H1 (cell line): ENCODE measurements at regions of chr16 and their contacts with region 1.

Region 1: GRCh38 chr16:28291873-28292660 is at the start of gene SBK1:
- DNase-seq: peak in 1 of 2 experiments; percentile 83
- H3K4me3 ChIP-seq: peak within 1 kb of the TSS; percentile 91 to 95 (median 94)
- H3K27ac ChIP-seq: peak within 1 kb of the TSS; percentile 77
- H3K4me1 ChIP-seq: peaks cover 3 to 16% (median 9%) of the 10 kb centered on the region in 4 experiments
- H3K27me3 ChIP-seq: no peaks in the 10 kb centered on the region
- CTCF ChIP-seq: no peak
- EP300 ChIP-seq: no peak
- POLR2A ChIP-seq: peak in 1 of 2 experiments; percentile 66; a peak in 2 of 3 replicates
- RAD21 ChIP-seq: no peak
- total RNA-seq, gene SBK1: 73.9 and 77.4 TPM in 2 replicates

Region 2: GRCh38 chr16:28304214-28304613 is 12.1 kb after region 1 on chr16:
- CTCF ChIA-PET with region 1: interaction called, 4 read pairs
- POLR2A ChIA-PET with region 1: interaction called, 26 read pairs
- DNase-seq: peak in 1 of 2 experiments; percentile 75
- H3K4me3 ChIP-seq: no peak overlapping the region
- H3K27ac ChIP-seq: no peak overlapping the region
- H3K4me1 ChIP-seq: peaks cover 0 to 2% (median 0%) of the 10 kb centered on the region in 4 experiments; a peak in 2 of 7 replicates
- H3K27me3 ChIP-seq: no peaks in the 10 kb centered on the region
- CTCF ChIP-seq: no peak
- EP300 ChIP-seq: no peak
- POLR2A ChIP-seq: no peak
- RAD21 ChIP-seq: no peak

Region 3: GRCh38 chr16:28317040-28317880 is 25.2 kb after region 1 on chr16:
- CTCF ChIA-PET with region 1: interaction called, 32 read pairs
- POLR2A ChIA-PET with region 1: interaction called, 6 read pairs
- DNase-seq: peak in 1 of 2 experiments; percentile 92
- H3K4me3 ChIP-seq: no peak overlapping the region
- H3K27ac ChIP-seq: no peak overlapping the region
- H3K4me1 ChIP-seq: no peaks in the 10 kb centered on the region
- H3K27me3 ChIP-seq: no peaks in the 10 kb centered on the region
- CTCF ChIP-seq: peak; percentile 90 to 95 (median 91)
- EP300 ChIP-seq: no peak
- POLR2A ChIP-seq: no peak
- RAD21 ChIP-seq: peak; percentile 72 to 81